Cardiac septum (tissue), 1 donor: ENCODE measurements at regions of chr2 and their contacts with region 1.

Region 1: GRCh38 chr2:190791347-190791975 is 89.2 kb upstream of the GLS start:
- DNase-seq: peak; percentile 81

Region 2: DNA sequence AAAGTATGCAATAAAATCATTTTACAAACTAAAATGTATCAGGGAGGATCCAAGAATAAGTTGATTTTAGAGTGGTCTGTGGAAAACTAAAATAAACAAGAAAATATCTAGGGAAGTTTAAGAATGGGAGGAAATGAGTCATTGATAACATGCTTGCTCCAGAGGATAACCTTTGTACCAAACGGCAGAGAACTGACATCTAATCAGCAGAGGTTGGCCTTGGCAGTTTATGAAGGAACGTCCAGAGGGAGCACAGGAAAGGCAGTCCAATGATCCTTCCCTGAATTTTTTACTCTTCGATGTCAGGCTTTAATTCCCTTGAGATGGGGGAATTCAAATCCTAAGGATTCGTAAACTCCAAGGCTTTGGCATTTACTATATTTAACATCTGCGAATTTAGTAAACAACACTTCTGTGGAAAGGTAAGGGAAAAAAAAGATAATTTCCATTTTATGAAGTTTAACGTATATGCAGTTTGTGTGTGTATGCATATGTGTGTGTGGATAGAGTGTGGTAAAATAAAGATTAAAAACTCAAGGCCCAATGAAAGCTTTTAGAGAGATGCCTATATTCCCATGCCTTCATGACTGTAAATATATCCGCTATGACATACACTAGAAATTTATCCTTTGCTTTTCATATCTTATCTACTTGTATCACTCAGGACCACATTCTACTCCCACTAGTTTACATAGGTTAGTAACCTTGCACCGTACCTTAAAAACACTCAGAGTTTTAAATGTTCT is 456.8 kb before region 1 on chr2:
- intact Hi-C with region 1: loop called (anchors 10 kb)
- DNase-seq: no peak

Region 3: DNA sequence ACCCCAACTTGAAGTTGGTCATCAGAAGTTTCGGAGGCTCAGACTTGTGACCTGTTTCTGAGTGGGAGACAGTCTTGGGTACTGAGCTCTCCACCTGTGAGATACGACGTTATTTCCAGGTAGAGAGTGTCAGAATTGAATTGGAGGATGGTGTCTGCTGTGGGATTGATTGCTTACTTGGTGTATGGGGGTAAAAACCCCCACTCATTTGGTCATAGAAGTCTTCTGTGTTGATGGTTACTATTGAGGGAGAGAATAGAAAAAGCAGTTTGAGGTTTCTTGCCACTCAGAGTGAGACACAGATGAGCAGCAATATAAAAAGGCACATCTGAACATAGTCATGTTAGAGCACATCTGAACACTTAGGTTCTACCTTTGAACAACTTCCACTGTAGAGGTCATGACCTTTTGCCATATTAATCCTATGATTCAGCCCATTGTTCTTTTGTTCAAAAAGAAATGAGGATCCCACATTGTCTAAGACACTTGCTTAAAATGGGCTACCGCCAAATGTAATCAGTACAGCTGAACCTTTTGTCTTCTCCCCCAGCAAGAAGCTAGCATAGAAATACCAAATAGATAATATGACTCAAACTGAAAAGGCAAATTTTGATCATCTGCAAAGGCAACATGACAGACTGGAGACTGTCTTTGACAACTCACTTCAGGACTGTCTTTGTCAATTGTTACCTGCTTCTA is 69.3 kb before region 1 on chr2:
- intact Hi-C with region 1: loop called (anchors 2 kb)
- DNase-seq: no peak

Region 4: DNA sequence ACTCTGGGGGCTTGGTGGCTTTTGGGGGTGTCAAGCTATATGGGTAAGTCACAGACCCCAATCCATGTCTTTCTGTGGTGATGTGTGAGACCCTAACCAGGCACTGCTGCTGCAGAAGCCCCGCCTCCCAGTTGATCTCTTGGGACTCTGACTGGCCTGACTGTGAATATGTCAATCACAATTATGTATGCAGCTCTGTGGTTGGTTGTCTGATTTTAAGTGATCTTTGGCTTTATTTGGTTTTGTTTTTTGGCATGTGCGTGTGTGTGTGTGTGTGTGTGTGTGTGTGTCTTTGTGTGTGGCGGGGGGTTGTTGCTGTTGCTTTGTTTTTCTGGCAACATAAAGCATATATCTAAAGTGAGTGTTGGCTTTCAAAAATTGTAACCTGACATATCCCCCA is 10.7 kb after region 1 on chr2:
- intact Hi-C with region 1: loop called (anchors 2 kb)
- DNase-seq: no peak

Region 5: DNA sequence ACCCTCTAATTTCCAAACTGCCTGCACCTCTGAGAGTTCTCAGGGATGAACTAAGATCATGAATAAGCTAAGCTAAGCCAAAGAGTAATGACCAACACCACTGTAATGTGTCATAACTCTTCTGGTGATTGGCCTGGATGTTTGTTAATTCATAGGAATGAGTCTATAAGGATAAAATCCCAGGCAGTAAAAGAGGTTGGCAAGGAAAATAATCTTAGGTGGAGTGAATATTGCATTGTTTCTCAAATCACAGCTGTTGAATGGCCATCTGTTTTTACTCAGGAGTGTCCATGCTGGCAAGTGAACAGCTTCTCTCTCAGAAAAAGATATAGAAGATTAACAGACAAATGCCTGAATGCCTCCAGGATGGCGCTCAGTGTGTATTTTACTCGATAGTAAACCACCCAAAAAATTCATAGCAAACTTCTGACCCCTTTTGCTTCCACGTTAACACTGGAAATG is 28.4 kb after region 1 on chr2:
- intact Hi-C with region 1: no loop called
- DNase-seq: no peak

Region 6: GRCh38 chr2:190896477-190896876 is 105.0 kb after region 1 on chr2:
- intact Hi-C with region 1: no loop called
- DNase-seq: no peak

Region 7: GRCh38 chr2:191740016-191740419 is 948.6 kb after region 1 on chr2:
- intact Hi-C with region 1: no loop called
- DNase-seq: no peak